T-cell (primary cell): ENCODE measurements at regions of chr18 and their contacts with region 1.

Region 1: GRCh38 chr18:74412116-74412880 is 44.8 kb downstream of the DIPK1C start:
- DNase-seq: no peak
- ATAC-seq: no peak
- H3K4me3 ChIP-seq: no peak overlapping the region
- H3K4me3 Mint-ChIP-seq: no peak overlapping the region
- H3K27ac ChIP-seq: no peak overlapping the region
- H3K27ac Mint-ChIP-seq: peak overlapping the region in 1 of 2 donors; percentile 53
- H3K4me1 ChIP-seq: peaks cover 8 to 16% of the 10 kb centered on the region in 2 experiments
- H3K4me1 Mint-ChIP-seq: peaks cover 29 to 47% (median 31%) of the 10 kb centered on the region in 3 donors
- H3K27me3 ChIP-seq: peaks cover 0 to 26% of the 10 kb centered on the region in 2 experiments
- H3K27me3 Mint-ChIP-seq: peaks cover 0 to 4% of the 10 kb centered on the region in 2 donors

Region 2: DNA sequence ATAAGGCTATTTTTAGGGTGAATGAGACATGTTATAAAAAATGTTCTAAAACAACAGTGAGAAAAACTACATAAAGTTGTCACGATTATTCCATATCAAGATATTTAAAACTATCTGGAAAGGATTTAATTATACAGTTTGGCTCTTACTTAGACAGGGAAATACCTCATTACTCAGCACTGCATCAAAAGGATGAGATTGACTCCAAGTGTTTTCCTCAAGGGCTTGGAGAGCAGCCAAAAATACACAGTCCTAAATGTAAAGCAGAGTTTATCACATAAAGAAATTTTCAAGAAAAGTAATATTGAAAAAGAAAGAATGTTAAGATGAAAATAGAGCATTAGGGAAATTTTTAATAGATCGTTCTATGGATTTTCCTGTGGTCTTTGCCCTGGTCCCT is 1259.0 kb before region 1 on chr18:
- CTCF ChIA-PET with region 1: no interaction called
- POLR2A ChIA-PET with region 1: no interaction called
- DNase-seq: no peak
- ATAC-seq: no peak
- H3K4me3 ChIP-seq: no peak overlapping the region
- H3K4me3 Mint-ChIP-seq: no peak overlapping the region
- H3K27ac ChIP-seq: no peak overlapping the region
- H3K27ac Mint-ChIP-seq: no peak overlapping the region
- H3K4me1 ChIP-seq: no peaks in the 10 kb centered on the region
- H3K4me1 Mint-ChIP-seq: no peaks in the 10 kb centered on the region
- H3K27me3 ChIP-seq: no peaks in the 10 kb centered on the region
- H3K27me3 Mint-ChIP-seq: no peaks in the 10 kb centered on the region

Region 3: GRCh38 chr18:74378179-74378682 is 34.1 kb before region 1 on chr18:
- CTCF ChIA-PET with region 1: interaction called, 8 to 10 read pairs
- POLR2A ChIA-PET with region 1: interaction called in 1 of 2 experiments, 3 read pairs
- DNase-seq: peak in 29 of 35 experiments; percentile 8 to 74 (median 32)
- ATAC-seq: peak; percentile 38 to 71 (median 50)
- H3K4me3 ChIP-seq: peak overlapping the region in 1 of 2 donors; percentile 25
- H3K4me3 Mint-ChIP-seq: peak overlapping the region; percentile 21 to 71 (median 58)
- H3K27ac ChIP-seq: peak overlapping the region; percentile 43
- H3K27ac Mint-ChIP-seq: peak overlapping the region; percentile 92
- H3K4me1 ChIP-seq: peaks cover 41 to 44% of the 10 kb centered on the region in 2 experiments
- H3K4me1 Mint-ChIP-seq: peaks cover 56 to 63% (median 61%) of the 10 kb centered on the region in 3 donors
- H3K27me3 ChIP-seq: peaks cover 0 to 7% of the 10 kb centered on the region in 2 experiments
- H3K27me3 Mint-ChIP-seq: no peaks in the 10 kb centered on the region